Head of caudate nucleus (tissue), 42 donors: ENCODE measurements at regions of chr19 and their contacts with region 1.

Region 1: DNA sequence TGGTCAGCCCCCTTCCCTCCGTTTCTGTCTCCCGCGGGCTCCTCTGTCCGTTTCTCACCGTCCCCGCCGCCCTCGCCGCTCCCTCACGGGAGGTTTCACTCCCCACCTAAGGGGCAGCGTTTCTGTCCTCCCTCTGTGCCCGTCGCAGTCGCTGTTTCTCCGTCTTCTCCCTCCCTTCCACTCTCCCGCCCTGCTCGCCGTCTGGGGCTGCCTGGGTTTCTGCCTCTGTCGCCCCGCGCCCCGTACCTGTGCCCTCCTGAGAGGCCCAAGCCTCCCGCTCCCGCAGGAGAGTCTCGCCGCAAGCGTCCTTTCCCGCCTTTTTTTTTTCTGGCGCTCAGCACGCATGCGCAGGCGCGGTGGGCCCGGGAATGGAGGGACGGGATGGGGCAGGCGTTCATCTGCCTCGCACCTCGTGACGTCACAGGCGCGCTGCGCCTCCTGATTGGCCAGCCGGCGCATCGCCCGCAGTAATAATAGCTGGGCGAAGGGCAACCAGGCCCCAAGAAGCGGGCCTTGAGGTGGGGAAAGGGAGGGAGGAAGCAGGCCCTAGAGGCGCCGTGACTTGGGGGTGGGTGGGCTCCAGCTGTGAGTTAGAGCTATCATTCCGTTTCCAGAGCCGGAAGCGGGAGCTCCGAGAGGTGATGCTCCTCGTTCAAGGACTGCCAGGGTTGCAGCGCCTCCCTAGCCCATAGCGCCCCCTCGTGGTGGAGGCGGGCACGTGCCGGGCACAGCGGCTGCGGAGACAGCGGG is 15.4 kb downstream of the SSC5D start:
- DNase-seq: peak; percentile 91 to 99 (median 96)

Region 2: GRCh38 chr19:55141696-55142095 is 362.0 kb before region 1 on chr19:
- intact Hi-C with region 1: loop called (anchors 5 kb)
- DNase-seq: peak in 1 of 42 donors; percentile 11

Region 3: DNA sequence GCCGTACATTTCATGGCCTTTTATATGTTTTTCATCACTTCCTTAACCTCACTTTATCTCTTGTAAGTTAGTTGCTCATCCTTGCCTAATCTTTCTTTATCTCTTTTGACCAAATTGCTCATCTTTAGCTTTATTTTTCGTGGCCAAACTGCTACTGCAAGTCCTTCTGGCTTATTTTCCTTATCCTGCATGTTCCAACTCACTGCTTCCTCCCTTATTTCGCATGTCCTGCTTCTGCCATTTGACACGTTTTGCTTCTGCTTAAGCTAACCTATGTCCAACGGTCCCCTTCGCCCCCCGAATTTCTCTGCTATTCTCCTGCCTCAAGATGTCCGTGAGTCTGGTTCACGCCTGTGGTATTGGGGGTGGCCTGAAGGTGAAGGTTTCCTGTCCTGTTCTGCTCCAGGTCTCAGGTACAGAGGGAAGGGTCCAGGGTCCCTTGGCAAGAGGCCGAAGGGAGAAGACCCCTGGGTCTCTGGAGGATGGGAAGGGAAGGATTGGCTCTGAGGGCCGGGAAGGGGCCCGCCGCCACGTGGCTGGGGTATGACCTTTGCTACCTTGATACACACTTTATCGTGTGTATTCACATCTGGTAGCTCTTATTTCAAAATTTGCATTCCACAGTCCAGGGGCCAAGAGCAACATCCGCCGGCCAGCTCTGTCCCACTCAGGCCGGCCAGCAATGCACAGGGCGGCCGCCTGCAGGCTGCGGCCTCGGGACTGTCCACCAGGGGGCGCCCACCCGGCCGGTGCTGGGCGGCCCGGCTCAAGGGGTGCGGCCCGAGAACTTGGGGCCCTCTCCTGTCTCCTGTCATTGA is 36.2 kb before region 1 on chr19:
- intact Hi-C with region 1: loop called (anchors 5 kb)
- DNase-seq: peak in 35 of 42 donors; percentile 27 to 87 (median 69)

Region 4: DNA sequence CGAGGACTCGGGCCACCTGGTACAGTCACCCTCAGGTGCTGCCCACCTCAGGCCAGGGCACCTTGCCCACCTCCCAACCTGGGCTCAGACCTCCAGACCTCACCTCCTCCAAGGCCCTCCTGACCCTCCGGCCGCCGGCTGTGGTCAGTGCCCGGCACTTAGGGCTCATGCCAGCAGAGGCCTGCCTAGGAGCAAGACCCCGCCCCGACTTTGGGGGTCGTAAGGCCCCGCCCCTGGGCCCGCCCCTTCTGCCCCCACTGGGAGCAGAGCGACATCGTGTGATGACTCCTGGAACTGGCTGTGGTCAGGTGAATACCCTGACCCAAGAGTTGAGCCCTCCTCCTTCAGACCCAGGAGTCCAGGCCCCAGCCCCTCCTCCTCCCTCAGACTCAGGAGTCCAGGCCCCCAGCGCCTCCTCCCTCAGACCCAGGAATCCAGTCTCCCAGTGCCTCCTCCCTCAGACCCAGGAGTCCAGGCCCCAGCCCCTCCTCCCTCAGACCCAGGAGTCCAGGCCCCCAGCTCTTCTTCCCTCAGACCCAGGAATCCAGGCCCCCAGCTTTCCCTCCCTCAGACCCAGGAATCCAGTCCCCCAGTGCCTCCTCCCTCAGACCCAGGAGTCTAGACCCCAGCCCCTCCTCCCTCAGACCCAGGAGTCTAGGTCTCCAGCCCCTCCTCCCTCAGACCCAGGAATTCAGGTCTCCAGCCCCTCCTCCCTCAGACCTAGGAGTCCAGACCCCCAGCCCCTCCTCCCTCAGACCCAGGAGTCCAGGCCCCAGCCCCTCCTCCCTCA is 33.5 kb after region 1 on chr19 and contains the start of gene SBK2:
- intact Hi-C with region 1: no loop called
- DNase-seq: no peak